Ovary (tissue), 10 donors: ENCODE measurements at regions of chr5 and their contacts with region 1.

Region 1: DNA sequence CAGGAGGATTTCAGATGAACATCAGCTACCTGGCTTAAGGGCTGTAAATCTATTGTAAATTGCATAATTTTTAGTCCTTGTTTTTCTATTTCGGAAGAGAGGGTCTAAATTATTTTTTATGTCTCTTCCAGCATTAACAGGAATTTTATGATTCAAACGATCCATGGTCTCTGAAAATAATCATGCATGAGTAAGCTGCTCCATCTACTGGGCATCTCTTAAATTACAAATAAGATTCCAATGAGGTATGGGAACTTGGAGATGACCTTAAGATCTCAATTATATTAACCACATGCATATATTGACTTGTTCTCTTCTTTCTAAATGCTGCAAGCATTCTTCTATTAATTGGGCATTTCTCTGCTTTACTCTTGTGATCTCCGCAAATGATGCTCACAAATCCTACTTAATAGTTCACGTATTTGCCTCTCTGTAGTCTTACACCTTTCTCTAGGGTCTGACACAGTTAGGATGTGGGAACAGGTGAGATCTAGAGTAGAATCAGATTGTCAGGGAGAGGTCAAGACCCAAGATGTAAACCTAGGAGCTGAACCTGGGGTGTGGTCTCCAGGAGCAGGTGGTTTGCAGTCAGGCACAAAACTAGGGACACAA is 86.9 kb downstream of the NUDT12 start:
- DNase-seq: no peak
- H3K4me3 ChIP-seq: no peak overlapping the region
- H3K27ac ChIP-seq: no peak overlapping the region
- H3K4me1 ChIP-seq: no peaks in the 10 kb centered on the region
- H3K27me3 ChIP-seq: no peaks in the 10 kb centered on the region
- CTCF ChIP-seq: peak in 1 of 3 donors; percentile 28
- EP300 ChIP-seq: no peak
- POLR2A ChIP-seq: no peak

Region 2: GRCh38 chr5:103232393-103232999 is 243.2 kb before region 1 on chr5:
- intact Hi-C with region 1: loop called in 1 of 4 experiments (anchors 10 kb)
- DNase-seq: no peak
- H3K4me3 ChIP-seq: no peak overlapping the region
- H3K27ac ChIP-seq: no peak overlapping the region
- H3K4me1 ChIP-seq: no peaks in the 10 kb centered on the region
- H3K27me3 ChIP-seq: no peaks in the 10 kb centered on the region
- CTCF ChIP-seq: peak in 1 of 3 donors; percentile 38
- EP300 ChIP-seq: no peak
- POLR2A ChIP-seq: no peak